HEK293 (cell line): ENCODE measurements at regions of chr2 and their contacts with region 1.

Region 1: DNA sequence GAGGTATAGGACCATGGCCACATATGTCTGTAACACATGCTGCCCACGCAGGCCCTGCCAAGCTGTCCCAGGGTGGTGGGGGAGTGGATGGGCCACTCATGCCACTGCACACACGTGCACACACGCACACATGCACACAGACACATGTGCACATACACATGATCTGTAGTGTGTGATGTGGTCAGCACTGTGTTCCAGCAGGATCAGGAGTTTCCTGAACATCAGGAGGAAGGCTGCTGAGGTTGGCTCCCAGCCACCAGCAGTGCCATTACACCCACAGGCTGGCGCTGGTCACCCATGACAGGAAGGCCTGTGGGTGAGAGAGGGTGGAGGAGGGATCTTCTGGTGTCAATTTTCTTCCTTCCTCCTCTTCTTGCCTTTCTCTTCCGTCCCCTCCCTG is 44.7 kb downstream of the POMC start:
- H3K4me3 ChIP-seq: no peak overlapping the region
- H3K27ac ChIP-seq: no peak overlapping the region
- H3K4me1 ChIP-seq: no peaks in the 10 kb centered on the region
- CTCF ChIP-seq: no peak

Region 2: DNA sequence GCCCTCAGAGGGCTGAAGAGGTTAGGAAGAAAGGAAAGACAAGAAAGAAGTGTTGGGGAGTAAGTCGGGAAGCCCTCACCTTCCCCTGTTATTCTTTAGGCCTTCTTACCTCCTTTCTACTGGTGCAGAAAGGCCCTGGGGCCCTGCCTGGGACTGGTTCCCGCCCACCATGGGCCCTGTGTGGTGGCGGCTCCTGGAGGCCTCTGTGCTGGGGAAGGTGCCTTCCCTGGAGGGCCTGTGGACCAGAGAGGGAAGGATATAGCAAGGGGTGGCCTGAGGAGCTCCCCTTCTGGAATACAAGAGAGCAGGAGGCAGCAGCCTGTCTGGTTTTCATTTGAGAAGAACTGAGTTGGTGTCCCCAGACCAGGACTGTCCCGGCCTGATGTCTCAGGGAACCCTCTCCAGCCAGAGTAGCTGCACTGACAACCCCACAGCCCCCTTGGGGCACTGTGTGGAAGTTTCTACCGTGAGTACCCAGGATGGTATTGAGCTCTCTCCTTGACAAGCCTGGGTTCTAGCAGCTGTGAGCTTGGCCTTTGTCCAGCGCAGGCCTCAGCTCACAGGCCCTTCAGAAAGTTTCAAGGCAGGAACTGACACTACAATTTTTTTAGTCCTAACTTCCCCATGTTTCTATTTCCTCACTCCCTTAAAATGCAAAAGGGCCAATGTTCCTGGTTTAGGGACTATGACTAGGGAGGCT is 34.7 kb before region 1 on chr2:
- CTCF ChIA-PET with region 1: no interaction called
- POLR2A ChIA-PET with region 1: interaction called, 10 read pairs
- H3K4me3 ChIP-seq: no peak overlapping the region
- H3K27ac ChIP-seq: no peak overlapping the region
- H3K4me1 ChIP-seq: no peaks in the 10 kb centered on the region
- CTCF ChIP-seq: no peak